ENCODE measurements at regions of chrX and their contacts with region 1.

Region 1: DNA sequence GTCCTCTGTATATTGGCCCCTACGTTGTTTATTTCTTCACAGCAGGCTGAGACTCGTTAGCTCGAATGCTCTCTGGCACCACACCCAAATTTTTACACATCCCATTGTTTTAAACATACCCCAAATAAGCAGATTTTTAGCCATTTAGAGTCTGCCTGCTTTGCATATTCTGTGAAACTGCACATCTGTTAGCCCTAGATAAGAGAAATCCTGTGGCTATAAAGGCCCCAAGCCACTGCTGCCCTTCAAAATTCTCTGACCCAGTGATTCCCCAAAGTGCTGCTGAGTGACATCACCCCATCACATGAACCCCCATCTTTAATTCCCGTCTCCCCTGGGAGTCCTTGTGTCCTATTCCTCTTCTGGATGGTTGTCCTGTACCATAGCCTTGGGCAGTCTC is 20.8 kb downstream of the TEX13C start:
- DNase-seq: no peak
- H3K4me3 ChIP-seq: no peak overlapping the region
- H3K27ac ChIP-seq: no peak overlapping the region
- H3K4me1 ChIP-seq: no peaks in the 10 kb centered on the region
- H3K27me3 ChIP-seq: no peaks in the 10 kb centered on the region
- CTCF ChIP-seq: no peak
- POLR2A ChIP-seq: no peak

Region 2: GRCh38 chrX:125374169-125374568 is 33.7 kb after region 1 on chrX:
- intact Hi-C with region 1: loop called (anchors 2 kb)
- DNase-seq: no peak
- H3K4me3 ChIP-seq: no peak overlapping the region
- H3K27ac ChIP-seq: no peak overlapping the region
- H3K4me1 ChIP-seq: no peaks in the 10 kb centered on the region
- H3K27me3 ChIP-seq: no peaks in the 10 kb centered on the region
- CTCF ChIP-seq: no peak
- POLR2A ChIP-seq: no peak